CD4-positive, alpha-beta memory T cell (primary cell): ENCODE measurements at regions of chr11 and their contacts with region 1.

Region 1: GRCh38 chr11:18634140-18635032 is at the start of gene SPTY2D1:
- DNase-seq: peak; percentile 96 to 100 (median 98)
- H3K4me3 ChIP-seq: peak within 1 kb of the TSS; percentile 91 to 99
- H3K4me3 Mint-ChIP-seq: peak within 1 kb of the TSS; percentile 92 to 99 (median 98)
- H3K27ac ChIP-seq: peak within 1 kb of the TSS; percentile 93
- H3K27ac Mint-ChIP-seq: peak within 1 kb of the TSS; percentile 97 to 100 (median 99)
- H3K4me1 ChIP-seq: peaks cover 21% of the 10 kb centered on the region
- H3K4me1 Mint-ChIP-seq: peaks cover 21 to 48% (median 31%) of the 10 kb centered on the region in 4 donors
- H3K27me3 ChIP-seq: no peaks in the 10 kb centered on the region
- H3K27me3 Mint-ChIP-seq: no peaks in the 10 kb centered on the region
- total RNA-seq, gene SPTY2D1: 23.0 to 25.2 TPM

Region 2: DNA sequence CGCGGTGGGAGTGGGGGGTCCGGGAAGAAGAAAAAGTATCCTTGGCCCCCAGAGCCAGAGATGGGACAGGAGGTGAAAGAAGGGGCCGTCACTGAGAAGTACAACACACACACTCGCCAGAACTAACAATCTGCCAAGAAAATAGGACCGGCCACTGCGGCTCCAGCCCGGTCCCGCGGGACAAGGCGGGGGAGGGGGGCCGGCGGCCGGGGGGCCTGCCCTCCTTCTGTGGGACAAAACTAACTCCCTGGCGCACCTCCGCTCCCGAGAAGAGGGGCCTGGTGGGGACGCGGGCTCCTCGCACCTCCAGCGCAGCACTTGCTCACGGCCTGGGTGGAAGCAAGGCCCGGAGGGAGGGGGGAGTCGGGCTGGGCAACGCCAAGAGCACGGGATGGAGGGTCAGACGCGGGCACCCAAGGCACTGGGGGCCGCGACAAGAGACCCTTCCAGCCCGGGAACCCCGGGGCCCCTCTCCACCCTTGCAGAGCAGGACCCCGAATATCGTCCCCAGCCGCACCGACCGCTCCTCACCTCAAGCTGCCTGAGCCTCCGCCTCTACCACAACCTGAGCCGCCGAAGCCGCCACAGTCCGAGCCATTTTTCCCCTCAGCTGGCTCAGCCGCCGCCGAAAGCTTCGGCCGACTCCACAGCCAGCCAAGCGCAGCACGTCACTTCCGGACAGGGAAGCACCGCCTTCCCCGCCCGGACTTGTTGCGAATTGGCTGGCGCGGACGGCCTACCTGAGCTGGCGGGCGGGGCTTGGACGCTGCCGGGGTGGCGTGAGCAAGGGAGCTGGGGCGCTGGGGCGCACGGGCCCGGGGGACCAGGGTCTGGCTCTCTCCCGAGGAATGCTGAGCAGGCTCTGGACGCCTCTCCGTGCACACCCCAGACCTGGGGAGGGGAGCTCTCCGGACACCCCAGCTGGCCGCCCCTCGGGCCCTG is 1426.8 kb before region 1 on chr11 and contains the start of gene PIK3C2A:
- CTCF ChIA-PET with region 1: no interaction called
- POLR2A ChIA-PET with region 1: no interaction called
- intact Hi-C with region 1: no loop called
- DNase-seq: peak; percentile 90 to 94 (median 91)
- H3K4me3 ChIP-seq: peak within 1 kb of the TSS; percentile 70 to 79
- H3K4me3 Mint-ChIP-seq: peak within 1 kb of the TSS; percentile 95 to 100 (median 99)
- H3K27ac ChIP-seq: peak within 1 kb of the TSS; percentile 80
- H3K27ac Mint-ChIP-seq: peak within 1 kb of the TSS; percentile 75 to 100 (median 98)
- H3K4me1 ChIP-seq: peaks cover 25% of the 10 kb centered on the region
- H3K4me1 Mint-ChIP-seq: peaks cover 15 to 48% (median 35%) of the 10 kb centered on the region in 4 donors
- H3K27me3 ChIP-seq: no peaks in the 10 kb centered on the region
- H3K27me3 Mint-ChIP-seq: no peaks in the 10 kb centered on the region
- total RNA-seq, gene PIK3C2A: 32.0 to 40.4 TPM

Region 3: GRCh38 chr11:18132341-18132740 is 502.0 kb before region 1 on chr11 and contains the start of gene MRGPRX3:
- CTCF ChIA-PET with region 1: no interaction called
- POLR2A ChIA-PET with region 1: no interaction called
- intact Hi-C with region 1: no loop called
- DNase-seq: no peak
- H3K4me3 ChIP-seq: no peak within 1 kb of the TSS
- H3K4me3 Mint-ChIP-seq: no peak within 1 kb of the TSS
- H3K27ac ChIP-seq: no peak within 1 kb of the TSS
- H3K27ac Mint-ChIP-seq: no peak within 1 kb of the TSS
- H3K4me1 ChIP-seq: no peaks in the 10 kb centered on the region
- H3K4me1 Mint-ChIP-seq: no peaks in the 10 kb centered on the region
- H3K27me3 ChIP-seq: peaks cover 11% of the 10 kb centered on the region
- H3K27me3 Mint-ChIP-seq: peaks cover 26 to 36% of the 10 kb centered on the region in 2 donors
- total RNA-seq, gene MRGPRX3: not detected

Region 4: GRCh38 chr11:18321980-18322711 is 312.2 kb before region 1 on chr11 and contains the starts of genes GTF2H1 and HPS5:
- CTCF ChIA-PET with region 1: no interaction called
- POLR2A ChIA-PET with region 1: interaction called, 16 read pairs
- intact Hi-C with region 1: loop called (anchors 1 kb)
- DNase-seq: peak; percentile 97 to 99 (median 98)
- H3K4me3 ChIP-seq: peak within 1 kb of the TSS; percentile 72 to 93
- H3K4me3 Mint-ChIP-seq: peak within 1 kb of the TSS; percentile 96 to 99 (median 98)
- H3K27ac ChIP-seq: peak within 1 kb of the TSS; percentile 99
- H3K27ac Mint-ChIP-seq: peak within 1 kb of the TSS; percentile 99 to 100 (median 100)
- H3K4me1 ChIP-seq: peaks cover 65% of the 10 kb centered on the region
- H3K4me1 Mint-ChIP-seq: peaks cover 50 to 86% (median 66%) of the 10 kb centered on the region in 4 donors
- H3K27me3 ChIP-seq: no peaks in the 10 kb centered on the region
- H3K27me3 Mint-ChIP-seq: no peaks in the 10 kb centered on the region
- total RNA-seq, gene GTF2H1: 60.1 to 61.6 TPM
- total RNA-seq, gene HPS5: 22.1 to 23.7 TPM

Region 5: DNA sequence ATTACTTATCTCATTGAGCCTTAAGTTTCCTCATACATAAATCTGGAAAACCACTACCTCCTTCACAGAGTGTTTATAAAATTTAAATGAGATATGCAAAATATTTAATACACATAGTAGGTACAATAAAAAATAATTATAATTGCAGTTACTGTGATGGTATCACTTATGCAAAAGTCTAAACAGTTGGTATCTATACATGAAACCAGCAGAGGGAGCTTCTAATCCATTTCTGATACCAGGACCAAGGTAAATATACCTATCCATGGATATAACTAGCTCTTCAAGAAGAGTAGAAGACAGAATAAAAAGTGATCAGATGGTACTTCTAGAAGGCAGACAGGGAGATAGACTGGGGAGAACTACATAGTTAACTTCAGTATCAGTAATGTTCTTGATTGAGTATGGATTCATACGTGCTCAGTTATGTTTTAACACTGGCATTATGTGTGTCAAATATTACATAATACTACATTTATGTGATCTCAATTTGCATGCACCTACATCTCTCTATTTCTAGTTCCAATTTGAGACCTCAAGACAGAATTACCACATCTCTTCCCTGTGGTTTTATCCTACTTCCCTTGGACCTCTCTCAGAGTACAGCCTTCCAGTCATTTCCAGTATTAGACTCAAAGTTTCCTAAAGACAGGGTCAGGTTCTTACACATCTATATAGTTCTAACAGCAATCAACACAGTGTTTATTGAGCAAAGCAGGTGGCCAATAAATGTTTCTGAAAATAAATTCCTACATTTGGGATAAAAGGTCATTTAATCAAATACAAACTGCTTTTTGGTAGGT is 94.0 kb before region 1 on chr11:
- CTCF ChIA-PET with region 1: interaction called, 13 read pairs
- POLR2A ChIA-PET with region 1: no interaction called
- intact Hi-C with region 1: loop called (anchors 5 kb)
- DNase-seq: peak in 4 of 5 donors; percentile 46 to 58 (median 54)
- H3K4me3 ChIP-seq: no peak overlapping the region
- H3K4me3 Mint-ChIP-seq: no peak overlapping the region
- H3K27ac ChIP-seq: no peak overlapping the region
- H3K27ac Mint-ChIP-seq: peak overlapping the region in 5 of 7 donors; percentile 25 to 81 (median 33)
- H3K4me1 ChIP-seq: no peaks in the 10 kb centered on the region
- H3K4me1 Mint-ChIP-seq: peaks cover 0 to 7% (median 0%) of the 10 kb centered on the region in 4 donors
- H3K27me3 ChIP-seq: no peaks in the 10 kb centered on the region
- H3K27me3 Mint-ChIP-seq: no peaks in the 10 kb centered on the region

Region 6: DNA sequence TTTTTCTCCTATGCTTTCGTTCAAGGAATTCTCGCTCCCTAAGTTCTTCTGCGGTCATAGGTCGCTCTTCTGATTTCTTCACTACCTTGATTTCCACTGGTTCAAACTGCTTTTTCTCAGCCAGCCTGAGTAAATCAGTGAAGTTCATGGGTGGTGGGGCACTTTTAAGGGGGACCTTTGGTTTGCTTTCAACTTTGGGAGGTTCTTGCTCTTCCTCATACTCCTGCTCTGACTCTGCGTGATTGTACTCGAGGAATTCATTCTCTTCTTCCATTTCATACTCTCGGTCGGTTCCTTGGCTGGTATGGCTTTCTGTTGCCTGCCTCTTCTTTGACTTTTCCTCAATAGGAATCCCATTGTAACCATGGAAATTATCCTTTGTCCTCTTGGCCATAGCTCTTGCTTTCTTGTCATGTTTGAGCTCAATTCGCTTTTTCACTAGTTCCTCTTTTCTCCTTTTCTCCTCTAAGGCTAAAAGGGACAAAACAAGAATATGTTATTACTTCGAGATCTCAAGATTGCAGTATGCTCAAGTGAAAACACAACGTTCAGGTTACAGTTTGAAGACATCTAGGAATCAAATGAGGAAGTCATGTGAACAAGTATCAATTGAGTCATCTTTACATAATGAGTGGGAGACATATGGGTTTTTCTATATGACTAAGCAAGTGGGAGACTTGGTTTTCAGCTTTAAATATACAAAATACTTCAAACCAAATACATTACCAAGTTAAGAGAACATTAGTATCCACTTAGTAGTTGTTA is 18.6 kb before region 1 on chr11:
- CTCF ChIA-PET with region 1: interaction called, 32 read pairs
- POLR2A ChIA-PET with region 1: interaction called, 46 read pairs
- intact Hi-C with region 1: loop called (anchors 1 kb)
- DNase-seq: no peak
- H3K4me3 ChIP-seq: no peak overlapping the region
- H3K4me3 Mint-ChIP-seq: peak overlapping the region in 5 of 8 donors; percentile 1 to 43 (median 15)
- H3K27ac ChIP-seq: no peak overlapping the region
- H3K27ac Mint-ChIP-seq: peak overlapping the region in 4 of 7 donors; percentile 63 to 90 (median 70)
- H3K4me1 ChIP-seq: peaks cover 48% of the 10 kb centered on the region
- H3K4me1 Mint-ChIP-seq: peaks cover 31 to 61% (median 42%) of the 10 kb centered on the region in 4 donors
- H3K27me3 ChIP-seq: no peaks in the 10 kb centered on the region
- H3K27me3 Mint-ChIP-seq: no peaks in the 10 kb centered on the region

Region 7: DNA sequence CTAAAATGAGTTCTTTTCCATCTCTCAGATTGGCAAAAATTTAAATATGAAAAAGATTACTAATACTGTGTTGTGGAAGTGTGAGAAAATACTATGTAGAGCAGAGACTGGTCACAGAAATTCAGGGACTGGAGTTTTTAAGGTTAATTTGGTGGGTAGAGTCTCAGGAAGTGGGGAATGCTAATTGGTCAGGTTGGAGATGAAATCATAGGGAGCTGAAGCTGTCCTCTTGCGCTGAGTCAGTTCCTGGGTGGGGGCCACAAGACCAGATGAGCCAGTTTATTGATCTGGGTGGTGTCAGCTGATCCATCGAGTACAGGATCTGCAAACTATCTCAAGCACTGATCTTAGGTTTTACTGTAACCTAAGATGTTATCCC is 34.8 kb after region 1 on chr11:
- CTCF ChIA-PET with region 1: interaction called, 3 read pairs
- POLR2A ChIA-PET with region 1: interaction called, 17 read pairs
- intact Hi-C with region 1: loop called (anchors 1 kb)
- DNase-seq: peak in 2 of 5 donors; percentile 13 to 63
- H3K4me3 ChIP-seq: no peak overlapping the region
- H3K4me3 Mint-ChIP-seq: peak overlapping the region in 7 of 8 donors; percentile 20 to 69 (median 63)
- H3K27ac ChIP-seq: no peak overlapping the region
- H3K27ac Mint-ChIP-seq: peak overlapping the region; percentile 3 to 91 (median 70)
- H3K4me1 ChIP-seq: peaks cover 47% of the 10 kb centered on the region
- H3K4me1 Mint-ChIP-seq: peaks cover 27 to 76% (median 52%) of the 10 kb centered on the region in 4 donors
- H3K27me3 ChIP-seq: no peaks in the 10 kb centered on the region
- H3K27me3 Mint-ChIP-seq: no peaks in the 10 kb centered on the region

Region 8: DNA sequence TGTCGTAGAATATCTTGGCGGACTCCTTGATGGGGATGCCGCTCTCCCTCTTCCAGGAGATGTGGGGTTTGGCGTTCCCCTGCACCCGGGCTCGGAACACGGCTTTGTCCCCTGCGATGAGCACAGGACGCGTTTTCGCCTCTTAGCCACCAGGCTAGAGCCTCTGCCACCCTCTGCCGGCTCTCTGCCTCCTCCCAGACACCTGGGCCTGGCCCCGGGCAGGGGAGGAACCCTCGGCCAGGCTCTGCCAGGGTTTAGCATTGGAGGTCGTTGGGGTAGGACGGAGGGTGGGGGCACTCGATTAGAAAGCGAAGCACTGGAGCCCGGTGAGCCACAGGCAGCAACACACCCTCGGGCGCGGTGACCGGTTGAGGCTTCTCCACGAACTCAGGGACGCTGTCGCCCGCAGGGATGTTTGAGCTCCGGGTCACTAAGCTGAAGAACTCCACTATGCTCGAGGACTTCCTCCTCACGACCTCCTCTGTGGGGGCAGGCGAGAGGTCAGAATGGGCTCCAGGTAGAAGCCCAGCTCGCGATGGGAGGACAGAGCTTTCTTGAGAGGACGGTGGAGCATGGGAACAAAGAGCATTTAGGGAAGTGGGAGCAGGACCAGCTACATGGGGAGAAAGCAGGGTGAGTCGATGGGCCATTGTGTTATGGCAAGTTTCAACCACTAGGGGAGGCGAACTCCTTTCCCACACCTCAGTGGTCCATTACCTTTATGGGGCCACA is 87.3 kb after region 1 on chr11:
- CTCF ChIA-PET with region 1: interaction called, 13 read pairs
- POLR2A ChIA-PET with region 1: interaction called, 4 read pairs
- intact Hi-C with region 1: loop called (anchors 1 kb)
- DNase-seq: peak; percentile 36 to 60 (median 53)
- H3K4me3 ChIP-seq: peak overlapping the region; percentile 77 to 81
- H3K4me3 Mint-ChIP-seq: peak overlapping the region; percentile 87 to 96 (median 92)
- H3K27ac ChIP-seq: peak overlapping the region; percentile 56
- H3K27ac Mint-ChIP-seq: peak overlapping the region; percentile 47 to 92 (median 81)
- H3K4me1 ChIP-seq: peaks cover 5% of the 10 kb centered on the region
- H3K4me1 Mint-ChIP-seq: peaks cover 4 to 13% (median 7%) of the 10 kb centered on the region in 4 donors
- H3K27me3 ChIP-seq: no peaks in the 10 kb centered on the region
- H3K27me3 Mint-ChIP-seq: no peaks in the 10 kb centered on the region